Activated naive CD4-positive, alpha-beta T cell treated with anti-CD3 and anti-CD28 coated beads for 36 hours (primary cell): ENCODE measurements at regions of chr4 and their contacts with region 1.

Region 1: GRCh38 chr4:111330786-111331185 is 707.9 kb upstream of the PITX2 start:
- DNase-seq: no peak
- H3K4me3 Mint-ChIP-seq: no peak overlapping the region
- H3K27ac Mint-ChIP-seq: no peak overlapping the region
- H3K4me1 Mint-ChIP-seq: no peaks in the 10 kb centered on the region
- H3K27me3 Mint-ChIP-seq: no peaks in the 10 kb centered on the region

Region 2: DNA sequence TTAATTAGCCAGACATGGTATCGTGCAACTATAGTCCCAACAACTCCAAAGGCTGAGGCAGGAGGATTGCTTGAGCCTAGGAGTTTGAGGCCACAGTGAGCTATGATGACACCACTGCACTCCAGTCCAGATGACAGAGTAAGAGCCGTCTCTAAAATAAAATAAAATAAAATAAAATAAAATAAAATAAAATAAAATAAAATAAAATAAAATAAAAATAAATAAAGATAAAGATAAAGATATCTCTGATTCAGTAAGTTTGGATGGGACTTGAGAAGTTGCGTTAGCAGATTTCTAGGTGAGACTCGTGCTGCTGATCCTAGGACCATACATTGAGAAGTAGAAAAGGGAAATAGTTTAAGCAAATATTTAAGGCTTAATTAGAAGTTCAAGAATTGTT is 559.6 kb after region 1 on chr4:
- CTCF ChIA-PET with region 1: no interaction called
- intact Hi-C with region 1: loop called (anchors 10 kb)
- DNase-seq: no peak
- H3K4me3 Mint-ChIP-seq: no peak overlapping the region
- H3K27ac Mint-ChIP-seq: no peak overlapping the region
- H3K4me1 Mint-ChIP-seq: no peaks in the 10 kb centered on the region
- H3K27me3 Mint-ChIP-seq: no peaks in the 10 kb centered on the region